Natural killer cell (primary cell): ENCODE measurements at regions of chr15 and their contacts with region 1.

Region 1: GRCh38 chr15:65530314-65531122 is at the start of gene HACD3:
- DNase-seq: peak; percentile 83 to 94
- ATAC-seq: peak; percentile 91 to 97 (median 96)
- H3K4me3 ChIP-seq: peak within 1 kb of the TSS; percentile 85
- H3K4me3 Mint-ChIP-seq: peak within 1 kb of the TSS; percentile 88
- H3K27ac ChIP-seq: peak within 1 kb of the TSS; percentile 47
- H3K27ac Mint-ChIP-seq: peak within 1 kb of the TSS; percentile 53 to 74
- H3K4me1 ChIP-seq: peaks cover 13% of the 10 kb centered on the region
- H3K4me1 Mint-ChIP-seq: peaks cover 24 to 25% of the 10 kb centered on the region in 2 donors
- H3K27me3 ChIP-seq: no peaks in the 10 kb centered on the region
- H3K27me3 Mint-ChIP-seq: no peaks in the 10 kb centered on the region
- CTCF ChIP-seq: no peak
- total RNA-seq, gene HACD3: 13.5 to 24.7 (median 15.1) TPM

Region 2: GRCh38 chr15:65318870-65319356 is 211.6 kb before region 1 on chr15:
- intact Hi-C with region 1: no loop called
- DNase-seq: peak; percentile 71 to 86
- ATAC-seq: peak; percentile 93 to 100 (median 99)
- H3K4me3 ChIP-seq: no peak overlapping the region
- H3K4me3 Mint-ChIP-seq: no peak overlapping the region
- H3K27ac ChIP-seq: no peak overlapping the region
- H3K27ac Mint-ChIP-seq: no peak overlapping the region
- H3K4me1 ChIP-seq: no peaks in the 10 kb centered on the region
- H3K4me1 Mint-ChIP-seq: peaks cover 5% of the 10 kb centered on the region in 2 donors
- H3K27me3 ChIP-seq: peaks cover 5% of the 10 kb centered on the region
- H3K27me3 Mint-ChIP-seq: peaks cover 0 to 8% of the 10 kb centered on the region in 2 donors
- CTCF ChIP-seq: peak; percentile 93

Region 3: DNA sequence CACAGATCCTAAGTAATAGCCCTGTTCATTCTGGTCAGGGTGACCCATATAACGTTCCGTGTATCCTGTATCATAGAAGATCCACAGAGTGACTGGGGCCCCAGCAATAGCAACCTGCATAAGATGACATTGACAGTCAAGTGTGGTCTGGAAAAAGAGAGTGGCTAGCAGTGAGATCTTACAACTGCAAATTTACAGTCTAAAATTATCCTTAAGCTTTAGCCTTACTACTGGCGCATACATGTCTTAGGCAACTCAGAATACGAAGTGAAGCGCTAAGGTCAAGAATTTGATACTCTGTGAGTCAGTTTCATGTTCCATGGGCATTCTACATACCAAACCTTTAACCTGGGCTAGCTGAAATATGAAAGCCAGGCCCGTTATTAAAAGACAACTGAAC is 78.5 kb before region 1 on chr15:
- intact Hi-C with region 1: no loop called
- DNase-seq: no peak
- ATAC-seq: no peak
- H3K4me3 ChIP-seq: no peak overlapping the region
- H3K4me3 Mint-ChIP-seq: no peak overlapping the region
- H3K27ac ChIP-seq: no peak overlapping the region
- H3K27ac Mint-ChIP-seq: no peak overlapping the region
- H3K4me1 ChIP-seq: no peaks in the 10 kb centered on the region
- H3K4me1 Mint-ChIP-seq: peaks cover 0 to 3% of the 10 kb centered on the region in 2 donors
- H3K27me3 ChIP-seq: no peaks in the 10 kb centered on the region
- H3K27me3 Mint-ChIP-seq: no peaks in the 10 kb centered on the region
- CTCF ChIP-seq: no peak

Region 4: GRCh38 chr15:65516997-65517865 is 13.3 kb before region 1 on chr15 and contains the start of gene DPP8:
- intact Hi-C with region 1: loop called (anchors 1 kb)
- DNase-seq: peak; percentile 93 to 96
- ATAC-seq: peak; percentile 77 to 94 (median 79)
- H3K4me3 ChIP-seq: peak within 1 kb of the TSS; percentile 80
- H3K4me3 Mint-ChIP-seq: peak within 1 kb of the TSS; percentile 88
- H3K27ac ChIP-seq: peak within 1 kb of the TSS; percentile 82
- H3K27ac Mint-ChIP-seq: peak within 1 kb of the TSS; percentile 85 to 89
- H3K4me1 ChIP-seq: peaks cover 22% of the 10 kb centered on the region
- H3K4me1 Mint-ChIP-seq: peaks cover 40 to 50% of the 10 kb centered on the region in 2 donors
- H3K27me3 ChIP-seq: no peaks in the 10 kb centered on the region
- H3K27me3 Mint-ChIP-seq: no peaks in the 10 kb centered on the region
- CTCF ChIP-seq: peak; percentile 90
- total RNA-seq, gene DPP8: 51.7 to 64.8 (median 62.4) TPM